Naive thymus-derived CD4-positive, alpha-beta T cell (primary cell): ENCODE measurements at regions of chr6 and their contacts with region 1.

Region 1: GRCh38 chr6:41334482-41335040 is 847 bp upstream of the NCR2 start:
- DNase-seq: no peak
- ATAC-seq: no peak
- H3K4me3 ChIP-seq: no peak overlapping the region
- H3K4me3 Mint-ChIP-seq: peak overlapping the region in 9 of 10 donors; percentile 16 to 79 (median 66)
- H3K27ac ChIP-seq: peak overlapping the region; percentile 57
- H3K27ac Mint-ChIP-seq: peak overlapping the region; percentile 83 to 96 (median 89)
- H3K4me1 ChIP-seq: peaks cover 31 to 43% of the 10 kb centered on the region in 2 donors
- H3K4me1 Mint-ChIP-seq: peaks cover 21 to 62% (median 51%) of the 10 kb centered on the region in 7 donors
- H3K27me3 ChIP-seq: no peaks in the 10 kb centered on the region
- H3K27me3 Mint-ChIP-seq: peaks cover 0 to 17% (median 0%) of the 10 kb centered on the region in 5 donors

Region 2: DNA sequence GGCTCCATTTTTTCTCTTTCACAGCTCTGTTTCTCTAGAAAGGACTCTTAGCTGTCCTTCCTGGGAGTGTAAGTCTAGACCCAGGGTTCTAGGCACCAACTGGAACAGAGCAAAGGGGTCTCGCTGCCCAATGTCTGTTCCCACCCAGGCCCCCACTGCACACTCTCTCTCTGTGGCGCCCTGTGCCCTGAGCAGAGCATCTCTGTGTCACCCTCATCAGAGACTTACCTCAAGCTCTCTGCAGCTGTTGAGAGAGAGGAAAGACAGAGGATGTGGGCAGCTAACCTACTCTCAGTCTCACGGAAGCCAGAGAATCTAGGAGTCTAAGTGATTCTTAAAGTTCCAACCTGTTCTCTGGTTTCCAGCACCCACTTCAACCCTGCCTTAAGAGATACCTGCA is 10.3 kb after region 1 on chr6:
- CTCF ChIA-PET with region 1: interaction called, 5 read pairs
- POLR2A ChIA-PET with region 1: interaction called, 9 read pairs
- intact Hi-C with region 1: loop called in 1 of 2 experiments (anchors 1 kb)
- DNase-seq: peak in 7 of 9 donors; percentile 26 to 68 (median 57)
- ATAC-seq: peak; percentile 94
- H3K4me3 ChIP-seq: no peak overlapping the region
- H3K4me3 Mint-ChIP-seq: peak overlapping the region in 9 of 10 donors; percentile 34 to 73 (median 53)
- H3K27ac ChIP-seq: peak overlapping the region; percentile 26
- H3K27ac Mint-ChIP-seq: peak overlapping the region; percentile 63 to 90 (median 85)
- H3K4me1 ChIP-seq: peaks cover 16 to 18% of the 10 kb centered on the region in 2 donors
- H3K4me1 Mint-ChIP-seq: peaks cover 20 to 42% (median 32%) of the 10 kb centered on the region in 7 donors
- H3K27me3 ChIP-seq: no peaks in the 10 kb centered on the region
- H3K27me3 Mint-ChIP-seq: peaks cover 0 to 26% (median 0%) of the 10 kb centered on the region in 5 donors

Region 3: DNA sequence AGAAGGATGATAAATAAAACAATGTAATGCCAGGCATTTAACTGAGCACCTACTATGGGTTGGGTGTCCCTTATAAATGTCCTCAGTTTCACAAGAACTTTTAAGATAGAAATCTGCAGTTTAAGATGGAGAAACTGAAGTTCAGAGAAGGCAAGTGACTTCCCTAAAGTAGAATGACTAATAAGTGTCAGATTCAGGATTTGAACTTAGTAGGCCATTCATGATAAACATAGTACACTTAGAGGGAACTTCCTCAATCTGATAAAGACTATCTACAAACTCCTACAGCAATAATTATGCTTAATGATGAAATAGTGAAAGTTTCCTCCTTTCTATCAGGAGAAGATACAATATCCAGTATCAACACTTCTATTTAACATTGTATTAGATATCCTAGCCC is 44.7 kb after region 1 on chr6:
- CTCF ChIA-PET with region 1: no interaction called
- POLR2A ChIA-PET with region 1: no interaction called
- intact Hi-C with region 1: no loop called
- DNase-seq: no peak
- ATAC-seq: peak; percentile 54
- H3K4me3 ChIP-seq: no peak overlapping the region
- H3K4me3 Mint-ChIP-seq: no peak overlapping the region
- H3K27ac ChIP-seq: no peak overlapping the region
- H3K27ac Mint-ChIP-seq: no peak overlapping the region
- H3K4me1 ChIP-seq: peaks cover 0 to 8% of the 10 kb centered on the region in 2 donors
- H3K4me1 Mint-ChIP-seq: peaks cover 7 to 15% (median 11%) of the 10 kb centered on the region in 7 donors
- H3K27me3 ChIP-seq: peaks cover 5 to 8% of the 10 kb centered on the region in 2 donors
- H3K27me3 Mint-ChIP-seq: peaks cover 54 to 80% (median 57%) of the 10 kb centered on the region in 5 donors